Dendritic cell treated with granulocyte-macrophage colony-stimulating factor and Interleukin-4, amounts not matched to agents 40 ng/mL and 50 ng/mL, for 4 days (primary cell): ENCODE measurements at regions of chr17 and their contacts with region 1.

Region 1: GRCh38 chr17:55295411-55296170 is 30.8 kb downstream of the HLF start:
- H3K4me3 Mint-ChIP-seq: no peak overlapping the region
- H3K27ac Mint-ChIP-seq: no peak overlapping the region
- H3K4me1 Mint-ChIP-seq: peaks cover 12% of the 10 kb centered on the region
- H3K27me3 Mint-ChIP-seq: no peaks in the 10 kb centered on the region

Region 2: DNA sequence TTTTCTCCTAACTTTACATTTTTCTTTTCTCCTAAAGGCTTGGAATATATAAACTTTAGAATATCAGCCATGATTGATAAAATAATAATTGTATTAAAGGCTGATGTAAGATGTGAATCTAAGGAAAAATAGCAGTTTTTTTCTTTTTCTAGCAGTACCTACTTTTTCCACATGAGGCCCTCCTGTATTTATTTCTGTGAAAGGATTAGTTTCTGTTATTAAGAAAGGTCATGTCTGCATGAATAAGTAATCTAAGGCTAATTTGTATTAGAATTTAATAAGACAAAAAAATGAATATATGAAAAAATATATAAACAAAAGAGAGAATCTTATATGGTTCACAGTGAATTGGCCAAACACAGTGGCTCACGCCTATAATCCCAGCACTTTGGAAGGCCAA is 241.7 kb before region 1 on chr17:
- intact Hi-C with region 1: loop called (anchors 2 kb)
- H3K4me3 Mint-ChIP-seq: no peak overlapping the region
- H3K27ac Mint-ChIP-seq: no peak overlapping the region
- H3K4me1 Mint-ChIP-seq: no peaks in the 10 kb centered on the region
- H3K27me3 Mint-ChIP-seq: no peaks in the 10 kb centered on the region

Region 3: DNA sequence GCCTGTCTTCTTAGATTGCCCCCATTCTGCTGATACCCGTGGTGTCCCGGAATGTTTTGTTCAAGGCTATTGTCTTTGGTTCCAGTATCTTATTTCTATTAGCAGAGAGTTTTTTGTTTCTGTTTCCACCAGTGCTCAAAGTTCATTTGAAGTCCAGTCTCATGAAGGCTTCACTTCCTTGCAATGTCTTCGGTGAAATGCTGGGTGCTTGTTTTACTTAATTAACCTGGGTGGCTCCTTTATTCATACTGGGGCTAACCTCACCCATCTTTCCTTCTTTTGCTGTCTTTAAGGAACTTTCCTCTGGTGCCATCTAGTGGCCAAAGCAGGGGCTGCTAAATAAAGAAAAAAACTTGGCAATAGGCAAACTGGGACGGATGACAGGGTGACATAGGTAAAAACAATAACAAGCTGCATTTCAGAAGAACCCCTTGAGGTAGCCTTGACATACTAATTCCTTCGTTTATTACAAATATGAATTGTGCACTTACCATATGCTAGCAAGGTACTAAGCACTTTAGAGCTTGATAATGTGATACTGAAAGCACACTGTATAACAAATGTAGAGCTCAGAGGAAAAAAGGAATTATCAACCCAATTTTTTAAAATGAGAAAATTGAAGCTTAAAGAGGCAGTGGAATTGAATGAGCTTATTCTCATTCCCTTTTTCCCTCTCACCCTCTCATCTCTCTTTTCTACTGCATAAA is 218.4 kb after region 1 on chr17:
- intact Hi-C with region 1: loop called (anchors 2 kb)
- H3K4me3 Mint-ChIP-seq: no peak overlapping the region
- H3K27ac Mint-ChIP-seq: no peak overlapping the region
- H3K4me1 Mint-ChIP-seq: no peaks in the 10 kb centered on the region
- H3K27me3 Mint-ChIP-seq: no peaks in the 10 kb centered on the region